ENCODE measurements at regions of chr3 and their contacts with region 1.

Region 1: DNA sequence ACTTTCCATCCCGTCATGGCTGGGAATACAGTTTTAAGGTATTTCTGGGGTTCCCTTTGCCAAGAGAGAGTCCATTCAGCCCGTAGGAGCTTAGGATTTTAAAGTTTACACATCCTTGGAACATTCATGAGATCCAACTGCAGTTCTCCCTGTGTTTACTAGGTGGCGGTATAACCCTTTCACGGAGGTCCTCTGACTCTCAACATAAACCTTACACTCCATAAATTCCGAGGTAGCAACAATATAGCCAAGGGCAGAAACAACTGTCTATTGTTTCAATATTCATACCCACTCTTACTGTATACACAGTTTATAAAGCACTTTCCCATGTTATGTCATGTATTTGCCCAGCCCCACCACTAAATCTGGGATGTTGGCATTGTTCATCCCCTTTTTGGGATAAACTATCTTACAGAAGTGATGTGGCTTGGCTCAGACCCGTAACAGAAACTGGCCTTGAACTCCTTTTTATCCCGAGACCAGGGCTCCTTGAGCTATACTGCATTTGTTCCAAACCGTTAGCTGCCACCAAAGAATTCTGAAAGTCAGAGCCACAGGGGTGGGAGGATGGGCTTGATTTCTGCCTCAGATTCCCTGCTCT is 69.2 kb upstream of the COL6A5 start:
- H3K4me3 ChIP-seq: no peak overlapping the region
- H3K27ac ChIP-seq: no peak overlapping the region
- H3K4me1 ChIP-seq: no peaks in the 10 kb centered on the region
- CTCF ChIP-seq: peak; percentile 41; the same call in 1 of the 2 replicates

Region 2: DNA sequence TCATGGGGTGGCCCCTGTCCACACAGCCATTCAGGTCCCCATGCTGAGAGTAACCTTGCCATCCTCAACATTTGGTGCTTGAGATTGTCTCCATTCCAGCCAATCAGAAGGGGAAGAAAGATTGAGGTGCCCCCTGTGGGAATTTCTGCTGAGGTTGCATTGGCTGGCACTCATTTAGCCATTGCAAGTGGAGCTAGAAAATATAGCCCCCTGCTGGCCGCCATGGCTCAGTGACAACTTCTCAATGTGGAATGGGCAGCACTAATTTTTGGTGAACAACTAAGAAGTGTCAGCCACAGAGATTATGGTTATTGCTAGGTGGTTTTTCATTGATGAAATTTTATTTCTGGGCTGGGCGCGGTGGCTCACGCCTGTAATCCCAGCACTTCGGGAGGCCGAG is 262.7 kb after region 1 on chr3:
- CTCF ChIA-PET with region 1: interaction called, 39 read pairs
- POLR2A ChIA-PET with region 1: no interaction called
- H3K4me3 ChIP-seq: no peak overlapping the region
- H3K27ac ChIP-seq: no peak overlapping the region
- H3K4me1 ChIP-seq: no peaks in the 10 kb centered on the region
- CTCF ChIP-seq: 0 out of 2 replicates have a peak, but pooled peaks have one; percentile 11